ENCODE measurements at regions of chr7 and their contacts with region 1.

Region 1: DNA sequence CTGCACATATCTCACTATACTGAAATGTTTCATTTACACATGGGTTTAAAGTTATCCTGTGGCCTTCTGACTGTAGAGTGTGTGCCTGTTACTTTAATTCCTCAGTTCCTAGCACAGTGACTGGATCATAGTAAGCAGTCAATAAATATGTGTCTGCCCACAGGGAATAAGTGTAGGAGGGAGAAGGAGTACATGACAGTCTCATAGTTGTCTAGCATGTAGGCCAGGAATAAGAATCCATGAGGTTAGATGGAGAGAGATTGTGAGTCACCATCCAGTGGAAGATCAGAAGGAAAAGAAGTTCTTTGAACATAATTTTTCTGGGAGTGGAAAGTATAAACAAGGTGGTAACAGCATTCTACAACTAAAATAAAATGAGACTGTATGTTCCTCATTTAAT is 36.6 kb upstream of the SEMA3A start:
- DNase-seq: no peak

Region 2: GRCh38 chr7:84277628-84278224 is 46.6 kb after region 1 on chr7:
- intact Hi-C with region 1: loop called in 1 of 2 experiments (anchors 1 kb)
- DNase-seq: no peak

Region 3: GRCh38 chr7:84948634-84949033 is 717.5 kb after region 1 on chr7:
- intact Hi-C with region 1: loop called in 1 of 2 experiments (anchors 5 kb)
- DNase-seq: no peak